ENCODE measurements at regions of chr17 and their contacts with region 1.

Region 1: GRCh38 chr17:38485146-38485468 is 56.8 kb downstream of the ARHGAP23 start:
- DNase-seq: no peak
- H3K4me3 ChIP-seq: no peak overlapping the region
- H3K27ac ChIP-seq: peak overlapping the region in 5 of 8 donors; percentile 15 to 70 (median 58)
- H3K4me1 ChIP-seq: peaks cover 0 to 31% (median 16%) of the 10 kb centered on the region in 6 donors
- H3K27me3 ChIP-seq: no peaks in the 10 kb centered on the region
- CTCF ChIP-seq: peak in 5 of 11 experiments; percentile 1 to 27 (median 8)
- POLR2A ChIP-seq: no peak

Region 2: GRCh38 chr17:38428112-38428642 is 56.9 kb before region 1 on chr17 and contains the start of gene ARHGAP23:
- intact Hi-C with region 1: loop called (anchors 10 kb)
- DNase-seq: peak; percentile 87
- H3K4me3 ChIP-seq: peak within 1 kb of the TSS; percentile 67 to 94 (median 86)
- H3K27ac ChIP-seq: peak within 1 kb of the TSS; percentile 53 to 90 (median 86)
- H3K4me1 ChIP-seq: peaks cover 10 to 96% (median 65%) of the 10 kb centered on the region in 6 donors
- H3K27me3 ChIP-seq: peaks cover 0 to 61% (median 0%) of the 10 kb centered on the region in 7 donors
- CTCF ChIP-seq: no peak
- POLR2A ChIP-seq: no peak
- total RNA-seq, gene ARHGAP23: 60.5 to 250 (median 109) TPM

Region 3: DNA sequence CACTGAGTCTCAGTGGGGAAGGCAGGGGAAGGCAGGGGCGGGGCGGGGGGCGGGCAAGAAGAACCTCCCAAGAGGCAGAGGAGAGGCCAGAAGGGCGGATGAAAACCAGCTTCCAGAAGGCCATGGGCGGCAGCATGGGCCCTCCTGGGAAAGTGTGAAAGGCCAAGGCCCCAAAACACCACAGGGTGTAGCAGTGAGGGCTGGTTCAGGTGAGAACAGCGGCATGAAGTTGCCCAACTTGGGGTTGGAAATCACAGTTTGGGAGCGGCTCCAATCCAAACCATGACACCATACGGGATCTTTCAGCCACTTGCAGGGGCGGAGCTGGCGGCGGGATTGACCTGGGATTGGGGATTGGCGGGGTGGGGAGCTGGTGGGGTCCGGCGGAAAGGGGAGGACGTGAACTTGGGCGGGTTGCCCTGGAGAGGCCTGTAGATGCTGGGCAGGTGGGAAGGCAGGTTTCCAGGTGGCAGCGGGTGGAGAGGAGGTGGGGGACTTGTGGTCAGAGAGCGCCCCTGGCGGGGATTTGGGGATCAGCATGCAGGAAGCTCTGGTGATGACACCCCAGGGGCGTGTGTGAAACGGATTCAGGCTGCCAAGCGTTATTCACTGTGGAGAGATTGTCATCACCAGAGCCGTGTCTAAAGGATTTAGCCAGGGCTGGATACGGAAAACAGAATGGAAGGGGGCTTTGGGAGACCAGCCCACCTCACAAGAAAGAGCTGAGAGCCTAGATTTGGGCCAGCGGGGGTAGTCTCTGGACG is 24.1 kb after region 1 on chr17:
- intact Hi-C with region 1: no loop called
- DNase-seq: peak; percentile 87
- H3K4me3 ChIP-seq: peak overlapping the region in 5 of 8 donors; percentile 2 to 56 (median 5)
- H3K27ac ChIP-seq: no peak overlapping the region
- H3K4me1 ChIP-seq: peaks cover 6 to 66% (median 36%) of the 10 kb centered on the region in 6 donors
- H3K27me3 ChIP-seq: peaks cover 0 to 52% (median 20%) of the 10 kb centered on the region in 7 donors
- CTCF ChIP-seq: peak in 10 of 11 experiments; percentile 5 to 80 (median 58)
- POLR2A ChIP-seq: no peak

Region 4: GRCh38 chr17:38605888-38606645 is 121.0 kb after region 1 on chr17 and contains the start of gene SRCIN1:
- intact Hi-C with region 1: no loop called
- DNase-seq: peak; percentile 81
- H3K4me3 ChIP-seq: peak within 1 kb of the TSS; percentile 16 to 73 (median 53)
- H3K27ac ChIP-seq: no peak within 1 kb of the TSS
- H3K4me1 ChIP-seq: peaks cover 0 to 47% (median 27%) of the 10 kb centered on the region in 6 donors
- H3K27me3 ChIP-seq: peaks cover 6 to 100% (median 81%) of the 10 kb centered on the region in 7 donors
- CTCF ChIP-seq: peak; percentile 39 to 86 (median 72)
- POLR2A ChIP-seq: no peak
- total RNA-seq, gene SRCIN1: 0.32 to 3.5 (median 2.1) TPM